Ovary (tissue), 10 donors: ENCODE measurements at regions of chr9 and their contacts with region 1.

Region 1: DNA sequence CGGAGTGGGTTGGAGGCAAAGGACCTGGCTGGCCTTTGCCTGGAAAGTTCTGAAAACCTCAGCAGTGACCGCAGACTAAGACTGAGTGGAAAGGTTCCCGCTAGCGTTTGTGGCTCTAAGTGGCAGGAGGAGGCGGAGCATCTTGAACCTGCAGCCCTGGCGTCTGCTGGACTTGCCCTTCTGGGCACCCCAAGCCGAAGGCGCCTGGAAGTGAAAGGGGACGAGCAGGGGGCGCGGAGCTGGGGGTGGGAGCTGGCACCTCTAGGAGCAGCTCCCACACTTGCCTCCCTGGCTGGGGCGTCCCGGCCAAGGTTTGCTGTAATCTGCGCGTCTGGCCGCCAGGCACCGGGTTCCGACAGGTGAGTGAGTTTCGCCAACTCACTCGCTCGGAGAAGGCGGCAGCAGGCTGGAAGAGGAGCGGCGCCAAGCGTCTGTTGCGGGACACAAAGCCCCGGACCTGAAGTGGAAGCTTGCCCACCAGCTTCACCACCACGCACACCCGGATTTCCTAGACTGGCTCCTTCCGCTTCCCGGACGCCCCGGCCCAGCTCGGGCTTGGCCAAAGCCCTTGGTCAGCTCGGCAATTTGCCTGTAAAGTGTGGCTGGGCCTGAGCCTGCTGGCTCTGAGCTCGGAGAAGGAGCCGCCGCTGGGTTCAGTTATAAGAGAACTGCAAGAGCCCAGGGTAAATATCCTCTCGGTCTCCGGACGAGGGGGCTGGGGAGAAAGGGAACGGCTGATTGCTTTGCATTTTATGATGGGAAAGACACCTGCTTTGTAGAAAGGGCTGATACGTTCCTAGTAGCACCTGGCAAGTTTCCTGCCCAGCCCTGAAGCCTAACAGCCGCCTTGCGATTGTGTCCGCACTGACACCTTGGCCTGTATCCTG is at the start of gene GNA14:
- DNase-seq: peak; percentile 68 to 83 (median 77)
- H3K4me3 ChIP-seq: peak within 1 kb of the TSS; percentile 52
- H3K27ac ChIP-seq: peak within 1 kb of the TSS; percentile 9 to 48
- H3K4me1 ChIP-seq: peaks cover 8% of the 10 kb centered on the region
- H3K27me3 ChIP-seq: no peaks in the 10 kb centered on the region
- CTCF ChIP-seq: no peak
- EP300 ChIP-seq: no peak
- POLR2A ChIP-seq: no peak
- total RNA-seq, gene GNA14: 4.9 to 9.9 (median 7.6) TPM

Region 2: DNA sequence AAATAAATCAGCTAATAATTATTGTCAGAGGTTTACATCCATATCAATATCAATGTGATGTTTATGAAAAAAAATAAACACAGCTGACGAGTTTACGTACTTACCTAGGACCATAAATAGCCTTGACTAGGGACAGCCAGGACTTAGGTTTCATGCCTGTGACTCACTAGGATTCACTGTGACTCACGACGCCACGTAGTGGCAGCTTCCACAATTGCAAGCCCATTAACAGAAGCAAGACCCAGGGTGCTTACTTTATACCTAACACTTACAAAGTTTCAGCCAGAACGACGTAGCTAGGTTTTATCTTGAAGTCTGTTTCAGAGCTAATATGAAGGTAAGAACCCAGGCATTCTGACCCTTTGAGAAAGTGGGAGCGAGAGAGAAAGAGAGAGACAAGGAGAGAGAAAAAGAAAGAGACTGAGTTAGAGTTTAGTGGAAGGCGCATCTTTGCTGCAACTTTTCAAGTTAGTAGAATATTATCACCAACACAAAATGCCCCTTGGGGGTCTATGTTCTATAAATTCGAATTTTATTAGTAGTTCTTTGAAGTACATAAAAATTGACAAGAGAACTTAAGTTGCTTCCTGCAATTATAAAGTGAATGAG is 191.5 kb before region 1 on chr9:
- intact Hi-C with region 1: loop called in 2 of 4 experiments (anchors 5 to 10 kb)
- DNase-seq: peak; percentile 72 to 91 (median 85)
- H3K4me3 ChIP-seq: no peak overlapping the region
- H3K27ac ChIP-seq: no peak overlapping the region
- H3K4me1 ChIP-seq: peaks cover 5% of the 10 kb centered on the region
- H3K27me3 ChIP-seq: no peaks in the 10 kb centered on the region
- CTCF ChIP-seq: peak; percentile 75 to 91 (median 79)
- EP300 ChIP-seq: no peak
- POLR2A ChIP-seq: no peak

Region 3: GRCh38 chr9:77469515-77470231 is 178.8 kb before region 1 on chr9:
- intact Hi-C with region 1: loop called in 1 of 4 experiments (anchors 10 kb)
- DNase-seq: no peak
- H3K4me3 ChIP-seq: no peak overlapping the region
- H3K27ac ChIP-seq: no peak overlapping the region
- H3K4me1 ChIP-seq: no peaks in the 10 kb centered on the region
- H3K27me3 ChIP-seq: no peaks in the 10 kb centered on the region
- CTCF ChIP-seq: no peak
- EP300 ChIP-seq: no peak
- POLR2A ChIP-seq: no peak

Region 4: DNA sequence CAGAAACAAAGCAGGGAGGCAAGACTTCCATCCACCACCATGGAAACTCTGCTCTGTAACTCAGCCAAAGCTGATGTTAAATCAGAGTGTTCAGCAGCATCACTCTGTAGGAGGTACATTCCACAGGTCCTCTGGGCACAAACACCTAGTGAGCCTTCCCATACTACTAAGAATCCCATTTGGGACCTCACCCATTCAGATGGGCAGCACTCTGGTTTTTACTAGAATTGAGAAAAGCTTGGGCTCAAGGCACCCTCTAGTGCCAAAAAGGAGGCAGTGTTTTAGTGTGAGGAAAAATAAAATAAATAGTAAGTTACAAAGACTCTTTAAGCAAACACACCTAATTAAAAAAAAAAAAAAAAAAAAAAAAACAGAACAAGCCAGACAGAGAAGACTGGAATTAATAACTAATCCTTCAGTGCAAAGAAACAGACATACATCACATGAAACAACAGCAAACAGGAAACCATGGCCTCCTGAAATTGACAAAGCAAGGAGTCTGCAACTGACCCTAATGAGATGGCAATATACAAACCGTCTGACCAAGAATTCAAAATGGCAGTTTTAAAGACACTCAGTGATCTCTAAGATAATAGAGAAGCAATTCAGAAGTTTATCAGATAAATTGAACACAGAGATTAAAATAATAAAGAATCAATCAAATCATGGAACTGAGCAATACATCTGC is 159.9 kb before region 1 on chr9:
- intact Hi-C with region 1: loop called in 1 of 4 experiments (anchors 5 kb)
- DNase-seq: no peak
- H3K4me3 ChIP-seq: no peak overlapping the region
- H3K27ac ChIP-seq: no peak overlapping the region
- H3K4me1 ChIP-seq: no peaks in the 10 kb centered on the region
- H3K27me3 ChIP-seq: no peaks in the 10 kb centered on the region
- CTCF ChIP-seq: no peak
- EP300 ChIP-seq: no peak
- POLR2A ChIP-seq: no peak